Natural killer cell (primary cell): ENCODE measurements at regions of chr1 and their contacts with region 1.

Region 1: GRCh38 chr1:243713470-243714186 is 136.4 kb downstream of the AKT3 start:
- DNase-seq: peak; percentile 7 to 35
- ATAC-seq: peak; percentile 96 to 100 (median 98)
- H3K4me3 ChIP-seq: no peak overlapping the region
- H3K4me3 Mint-ChIP-seq: peak overlapping the region; percentile 83
- H3K27ac ChIP-seq: no peak overlapping the region
- H3K27ac Mint-ChIP-seq: peak overlapping the region; percentile 74 to 83
- H3K4me1 ChIP-seq: peaks cover 2% of the 10 kb centered on the region
- H3K4me1 Mint-ChIP-seq: peaks cover 33 to 39% of the 10 kb centered on the region in 2 donors
- H3K27me3 ChIP-seq: no peaks in the 10 kb centered on the region
- H3K27me3 Mint-ChIP-seq: no peaks in the 10 kb centered on the region
- CTCF ChIP-seq: no peak

Region 2: GRCh38 chr1:243301059-243301458 is 412.6 kb before region 1 on chr1:
- intact Hi-C with region 1: no loop called
- DNase-seq: no peak
- ATAC-seq: no peak
- H3K4me3 ChIP-seq: no peak overlapping the region
- H3K4me3 Mint-ChIP-seq: no peak overlapping the region
- H3K27ac ChIP-seq: no peak overlapping the region
- H3K27ac Mint-ChIP-seq: no peak overlapping the region
- H3K4me1 ChIP-seq: no peaks in the 10 kb centered on the region
- H3K4me1 Mint-ChIP-seq: no peaks in the 10 kb centered on the region
- H3K27me3 ChIP-seq: no peaks in the 10 kb centered on the region
- H3K27me3 Mint-ChIP-seq: no peaks in the 10 kb centered on the region
- CTCF ChIP-seq: no peak

Region 3: DNA sequence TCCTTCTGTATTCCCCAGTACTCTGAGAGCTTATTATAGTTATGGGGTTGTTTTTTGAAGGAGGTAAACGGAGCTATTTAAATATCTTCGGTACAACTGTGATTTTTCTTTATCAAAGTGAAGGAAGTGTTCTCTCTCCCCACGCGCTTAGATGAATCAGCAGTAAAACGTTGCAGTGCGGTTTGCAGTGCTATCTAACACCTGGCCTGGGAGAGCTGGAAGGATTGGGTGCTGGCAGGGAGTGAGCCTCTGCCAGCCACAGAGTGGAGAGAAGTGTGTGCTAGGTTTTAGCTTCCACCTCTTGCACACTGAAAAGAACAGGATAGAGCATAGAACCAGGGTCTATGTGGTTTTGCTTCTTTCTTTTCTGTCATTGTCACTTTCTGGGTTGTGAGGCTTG is 291.8 kb before region 1 on chr1:
- intact Hi-C with region 1: no loop called
- DNase-seq: peak; percentile 28 to 53
- ATAC-seq: peak; percentile 86 to 96 (median 92)
- H3K4me3 ChIP-seq: no peak overlapping the region
- H3K4me3 Mint-ChIP-seq: peak overlapping the region; percentile 43
- H3K27ac ChIP-seq: no peak overlapping the region
- H3K27ac Mint-ChIP-seq: peak overlapping the region in 1 of 2 donors; percentile 48
- H3K4me1 ChIP-seq: peaks cover 8% of the 10 kb centered on the region
- H3K4me1 Mint-ChIP-seq: peaks cover 15 to 18% of the 10 kb centered on the region in 2 donors
- H3K27me3 ChIP-seq: no peaks in the 10 kb centered on the region
- H3K27me3 Mint-ChIP-seq: no peaks in the 10 kb centered on the region
- CTCF ChIP-seq: no peak

Region 4: DNA sequence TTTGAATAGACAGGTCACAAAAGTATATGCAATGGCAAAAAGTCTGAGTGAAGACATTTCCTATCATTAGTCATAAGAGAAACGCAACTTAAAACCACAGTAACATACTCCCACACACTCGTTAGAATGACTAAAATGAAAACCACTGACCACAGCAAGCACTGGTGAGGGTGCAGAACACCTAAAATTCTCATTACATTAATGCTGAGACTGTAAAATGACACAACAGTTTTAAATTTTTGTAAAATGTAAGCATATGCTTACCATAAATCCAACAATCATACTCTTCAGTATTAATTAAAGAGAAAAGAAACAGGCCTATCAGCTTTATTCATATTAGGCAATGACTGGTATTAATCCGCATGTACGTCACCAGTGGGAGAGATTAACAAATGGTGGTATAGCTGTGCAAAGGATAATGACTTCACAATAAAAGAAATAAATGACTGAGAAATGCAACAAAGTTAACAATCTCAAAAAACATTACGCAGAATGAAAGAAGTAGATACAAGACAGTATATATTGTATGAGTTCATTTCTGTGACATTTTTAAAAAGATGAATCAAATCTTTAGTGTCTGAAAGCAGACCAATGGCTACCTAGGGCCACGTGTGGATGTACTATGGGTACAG is 117.1 kb before region 1 on chr1:
- intact Hi-C with region 1: loop called (anchors 5 kb)
- DNase-seq: peak in 1 of 2 donors; percentile 66
- ATAC-seq: peak; percentile 78 to 93 (median 86)
- H3K4me3 ChIP-seq: no peak overlapping the region
- H3K4me3 Mint-ChIP-seq: peak overlapping the region; percentile 67
- H3K27ac ChIP-seq: peak overlapping the region; percentile 80
- H3K27ac Mint-ChIP-seq: peak overlapping the region; percentile 84 to 90
- H3K4me1 ChIP-seq: peaks cover 4% of the 10 kb centered on the region
- H3K4me1 Mint-ChIP-seq: peaks cover 26 to 31% of the 10 kb centered on the region in 2 donors
- H3K27me3 ChIP-seq: no peaks in the 10 kb centered on the region
- H3K27me3 Mint-ChIP-seq: no peaks in the 10 kb centered on the region
- CTCF ChIP-seq: no peak

Region 5: DNA sequence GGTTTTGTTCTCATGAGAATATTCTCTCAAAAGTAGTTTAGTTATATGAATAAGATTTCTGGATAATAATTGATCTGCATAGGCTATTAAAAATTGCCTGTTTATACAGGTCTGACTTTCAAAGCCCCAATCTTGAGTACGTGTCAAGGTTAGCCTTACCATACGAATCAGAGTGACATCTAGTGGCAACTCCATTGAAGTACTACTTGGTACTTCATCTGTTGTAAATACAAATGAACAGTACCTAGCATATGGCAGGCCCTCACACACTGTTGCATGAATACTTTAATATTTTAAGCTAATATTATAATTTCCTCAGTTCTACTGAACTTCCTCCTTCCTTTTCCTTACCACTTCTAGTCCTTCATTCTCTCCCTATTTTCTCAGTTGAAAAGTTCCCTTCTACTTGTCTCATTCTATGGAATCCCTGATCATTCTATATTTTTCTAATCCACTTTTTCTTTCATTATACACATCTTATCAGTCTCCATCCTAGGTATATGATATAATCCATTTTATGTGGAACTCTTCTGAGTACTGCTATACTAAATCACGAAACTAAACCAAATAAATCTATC is 35.2 kb after region 1 on chr1:
- intact Hi-C with region 1: loop called (anchors 1 kb)
- DNase-seq: peak in 1 of 2 donors; percentile 79
- ATAC-seq: peak; percentile 94 to 100 (median 100)
- H3K4me3 ChIP-seq: no peak overlapping the region
- H3K4me3 Mint-ChIP-seq: no peak overlapping the region
- H3K27ac ChIP-seq: no peak overlapping the region
- H3K27ac Mint-ChIP-seq: peak overlapping the region in 1 of 2 donors; percentile 58
- H3K4me1 ChIP-seq: no peaks in the 10 kb centered on the region
- H3K4me1 Mint-ChIP-seq: peaks cover 13 to 23% of the 10 kb centered on the region in 2 donors
- H3K27me3 ChIP-seq: no peaks in the 10 kb centered on the region
- H3K27me3 Mint-ChIP-seq: no peaks in the 10 kb centered on the region
- CTCF ChIP-seq: peak; percentile 76

Region 6: DNA sequence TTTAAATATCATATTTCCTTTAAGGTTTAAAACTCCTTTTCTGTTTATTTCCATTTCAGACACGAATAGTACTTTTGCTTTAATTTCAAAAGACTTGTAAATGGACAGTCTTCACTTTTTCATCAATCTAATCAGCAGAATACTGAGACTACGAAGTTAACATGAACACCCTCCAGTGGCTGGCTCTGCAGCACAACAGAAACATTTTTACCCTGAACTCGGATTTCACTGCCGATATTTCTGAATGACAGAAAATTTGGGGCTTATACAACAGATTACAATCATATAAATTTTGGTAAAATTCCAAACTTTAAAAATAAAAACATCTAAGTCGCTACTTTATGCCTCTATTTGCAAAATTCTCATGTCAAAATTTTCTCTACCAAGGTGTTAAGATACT is 50.2 kb after region 1 on chr1:
- intact Hi-C with region 1: no loop called
- DNase-seq: no peak
- ATAC-seq: no peak
- H3K4me3 ChIP-seq: no peak overlapping the region
- H3K4me3 Mint-ChIP-seq: no peak overlapping the region
- H3K27ac ChIP-seq: no peak overlapping the region
- H3K27ac Mint-ChIP-seq: no peak overlapping the region
- H3K4me1 ChIP-seq: peaks cover 3% of the 10 kb centered on the region
- H3K4me1 Mint-ChIP-seq: peaks cover 30 to 41% of the 10 kb centered on the region in 2 donors
- H3K27me3 ChIP-seq: no peaks in the 10 kb centered on the region
- H3K27me3 Mint-ChIP-seq: no peaks in the 10 kb centered on the region
- CTCF ChIP-seq: no peak

Region 7: GRCh38 chr1:243850452-243851256 is 137.0 kb after region 1 on chr1:
- intact Hi-C with region 1: loop called (anchors 1 kb)
- DNase-seq: peak; percentile 81 to 90
- ATAC-seq: peak; percentile 42 to 58 (median 52)
- H3K4me3 ChIP-seq: peak overlapping the region; percentile 85
- H3K4me3 Mint-ChIP-seq: peak overlapping the region; percentile 90
- H3K27ac ChIP-seq: peak overlapping the region; percentile 89
- H3K27ac Mint-ChIP-seq: peak overlapping the region; percentile 89 to 99
- H3K4me1 ChIP-seq: peaks cover 10% of the 10 kb centered on the region
- H3K4me1 Mint-ChIP-seq: peaks cover 26 to 30% of the 10 kb centered on the region in 2 donors
- H3K27me3 ChIP-seq: no peaks in the 10 kb centered on the region
- H3K27me3 Mint-ChIP-seq: peaks cover 5 to 8% of the 10 kb centered on the region in 2 donors
- CTCF ChIP-seq: no peak